ENCODE measurements at regions of chr14 and their contacts with region 1.

Region 1: DNA sequence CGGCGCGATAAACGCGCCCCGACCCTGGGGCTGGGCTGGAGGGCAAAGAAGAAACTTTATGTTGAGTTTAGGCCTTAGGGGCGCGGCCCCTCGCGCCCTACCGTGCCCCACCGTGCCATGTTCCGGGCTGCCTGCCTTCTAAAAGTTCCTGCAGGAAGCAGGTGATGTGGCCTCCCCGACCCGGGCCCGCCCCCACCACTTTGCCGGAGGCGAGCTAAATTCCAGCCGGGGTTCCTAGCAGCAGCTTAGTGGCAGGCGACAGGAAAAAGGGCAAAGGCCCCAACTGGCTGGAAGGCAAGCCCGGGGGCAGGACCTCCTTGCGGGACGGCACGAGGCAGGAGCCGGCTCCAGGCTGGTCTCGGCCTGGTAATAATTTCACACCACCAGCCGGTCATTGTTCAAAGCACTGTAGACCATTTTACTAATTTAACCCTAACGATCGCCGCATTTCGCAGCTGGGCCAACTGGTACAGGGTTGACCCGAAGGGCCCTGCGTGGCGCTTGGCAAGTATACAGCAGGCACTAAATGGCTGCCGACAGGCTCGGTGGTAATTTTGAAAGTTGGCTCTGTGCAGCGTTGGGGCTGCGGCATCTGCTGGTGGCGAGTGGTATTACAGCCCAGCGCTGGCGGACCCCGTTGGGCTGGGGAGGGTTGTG is 895 bp upstream of the CCDC88C start:
- DNase-seq: peak; percentile 89
- ATAC-seq: peak; percentile 76

Region 2: GRCh38 chr14:91303091-91303923 is 115.2 kb before region 1 on chr14:
- intact Hi-C with region 1: no loop called
- DNase-seq: no peak
- ATAC-seq: peak; percentile 57

Region 3: GRCh38 chr14:91367173-91368171 is 51.0 kb before region 1 on chr14:
- intact Hi-C with region 1: loop called (anchors 10 kb)
- DNase-seq: no peak
- ATAC-seq: peak; percentile 17

Measured in Right ventricle myocardium inferior (tissue), 1 donor.